ENCODE measurements at regions of chr15 and their contacts with region 1.

Region 1: GRCh38 chr15:68038246-68038645 is 15.9 kb upstream of the PIAS1 start:
- DNase-seq: no peak
- ATAC-seq: no peak
- H3K4me3 ChIP-seq: no peak overlapping the region
- H3K4me3 Mint-ChIP-seq: no peak overlapping the region
- H3K27ac ChIP-seq: no peak overlapping the region
- H3K27ac Mint-ChIP-seq: no peak overlapping the region
- H3K4me1 ChIP-seq: no peaks in the 10 kb centered on the region
- H3K4me1 Mint-ChIP-seq: peaks cover 15 to 16% of the 10 kb centered on the region in 2 donors
- H3K27me3 ChIP-seq: peaks cover 2% of the 10 kb centered on the region
- H3K27me3 Mint-ChIP-seq: peaks cover 35 to 65% of the 10 kb centered on the region in 2 donors
- CTCF ChIP-seq: no peak

Region 2: DNA sequence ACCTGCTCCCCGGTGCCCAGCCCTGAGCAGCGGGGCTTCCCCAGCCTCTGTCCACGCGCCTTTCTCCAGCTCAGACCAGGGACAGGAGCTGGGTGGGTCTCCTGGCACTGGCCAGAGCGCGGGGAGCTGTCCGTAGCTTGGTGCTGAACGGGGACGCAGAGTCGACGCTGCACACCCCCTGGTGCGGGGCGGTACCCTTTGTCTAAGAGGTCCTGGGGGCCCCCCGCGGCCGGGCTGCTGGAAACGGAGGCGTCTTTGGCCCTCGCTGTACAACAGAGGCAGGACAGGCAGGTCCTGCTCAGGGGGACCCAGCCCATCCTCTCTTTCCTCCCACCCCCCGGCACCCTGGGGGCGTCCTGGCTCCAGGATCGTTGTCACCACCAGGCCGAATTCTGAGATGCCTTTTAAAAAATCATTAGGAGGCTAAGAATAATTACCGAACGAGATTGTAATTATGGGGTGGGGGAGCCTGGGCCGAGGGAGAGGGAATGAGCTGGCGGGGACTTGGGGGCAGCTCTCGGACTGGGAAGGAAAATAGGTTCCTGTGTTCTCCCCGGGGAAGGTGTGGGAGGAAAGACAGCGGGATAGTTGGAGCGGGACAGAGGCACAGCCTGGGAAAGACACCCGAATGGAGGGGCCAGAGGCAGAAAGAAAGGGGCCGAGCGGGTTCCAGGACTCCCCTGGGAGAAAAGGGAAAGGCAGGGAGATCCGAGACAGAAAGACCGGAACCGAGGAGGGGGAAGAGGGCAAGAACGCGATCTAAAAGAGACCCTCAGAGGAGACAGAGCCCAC is 217.1 kb before region 1 on chr15:
- intact Hi-C with region 1: no loop called
- DNase-seq: peak in 1 of 2 donors; percentile 59
- ATAC-seq: peak; percentile 27 to 92 (median 64)
- H3K4me3 ChIP-seq: no peak overlapping the region
- H3K4me3 Mint-ChIP-seq: peak overlapping the region; percentile 53
- H3K27ac ChIP-seq: no peak overlapping the region
- H3K27ac Mint-ChIP-seq: no peak overlapping the region
- H3K4me1 ChIP-seq: peaks cover 30% of the 10 kb centered on the region
- H3K4me1 Mint-ChIP-seq: peaks cover 29 to 44% of the 10 kb centered on the region in 2 donors
- H3K27me3 ChIP-seq: peaks cover 58% of the 10 kb centered on the region
- H3K27me3 Mint-ChIP-seq: peaks cover 72 to 79% of the 10 kb centered on the region in 2 donors
- CTCF ChIP-seq: no peak

Region 3: GRCh38 chr15:67839929-67840748 is 198.1 kb before region 1 on chr15 and contains the start of gene RNU6-1:
- intact Hi-C with region 1: no loop called
- DNase-seq: peak; percentile 94 to 98
- ATAC-seq: peak; percentile 85 to 97 (median 92)
- H3K4me3 ChIP-seq: peak within 1 kb of the TSS; percentile 96
- H3K4me3 Mint-ChIP-seq: peak within 1 kb of the TSS; percentile 96
- H3K27ac ChIP-seq: peak within 1 kb of the TSS; percentile 97
- H3K27ac Mint-ChIP-seq: peak within 1 kb of the TSS; percentile 99
- H3K4me1 ChIP-seq: peaks cover 32% of the 10 kb centered on the region
- H3K4me1 Mint-ChIP-seq: peaks cover 35 to 41% of the 10 kb centered on the region in 2 donors
- H3K27me3 ChIP-seq: peaks cover 13% of the 10 kb centered on the region
- H3K27me3 Mint-ChIP-seq: peaks cover 16 to 20% of the 10 kb centered on the region in 2 donors
- CTCF ChIP-seq: no peak
- total RNA-seq, gene RNU6-1: not detected

Region 4: DNA sequence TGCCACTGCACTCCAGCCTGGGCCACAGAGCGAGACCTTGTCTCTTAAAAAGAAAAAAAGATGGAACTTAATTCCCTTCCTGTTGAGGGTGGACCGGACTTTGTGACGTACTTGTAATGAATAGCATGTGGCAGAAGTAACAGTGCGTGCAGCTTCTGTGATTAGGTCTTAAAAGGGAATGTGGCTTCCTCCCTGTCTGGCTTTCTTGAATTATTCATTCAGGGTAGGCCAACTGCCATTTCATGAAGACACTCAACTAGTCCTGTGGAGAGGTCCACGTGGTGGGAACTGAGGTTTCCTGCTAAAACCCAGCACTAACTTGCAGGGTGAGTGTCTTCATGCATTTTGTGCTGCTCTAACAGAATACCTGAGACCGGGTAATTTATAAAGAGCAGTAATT is 83.0 kb before region 1 on chr15:
- intact Hi-C with region 1: no loop called
- DNase-seq: no peak
- ATAC-seq: no peak
- H3K4me3 ChIP-seq: no peak overlapping the region
- H3K4me3 Mint-ChIP-seq: no peak overlapping the region
- H3K27ac ChIP-seq: no peak overlapping the region
- H3K27ac Mint-ChIP-seq: no peak overlapping the region
- H3K4me1 ChIP-seq: no peaks in the 10 kb centered on the region
- H3K4me1 Mint-ChIP-seq: no peaks in the 10 kb centered on the region
- H3K27me3 ChIP-seq: no peaks in the 10 kb centered on the region
- H3K27me3 Mint-ChIP-seq: peaks cover 21 to 30% of the 10 kb centered on the region in 2 donors
- CTCF ChIP-seq: no peak

Region 5: GRCh38 chr15:68014219-68014618 is 24.0 kb before region 1 on chr15:
- intact Hi-C with region 1: loop called (anchors 2 kb)
- DNase-seq: no peak
- ATAC-seq: no peak
- H3K4me3 ChIP-seq: no peak overlapping the region
- H3K4me3 Mint-ChIP-seq: no peak overlapping the region
- H3K27ac ChIP-seq: no peak overlapping the region
- H3K27ac Mint-ChIP-seq: no peak overlapping the region
- H3K4me1 ChIP-seq: no peaks in the 10 kb centered on the region
- H3K4me1 Mint-ChIP-seq: no peaks in the 10 kb centered on the region
- H3K27me3 ChIP-seq: no peaks in the 10 kb centered on the region
- H3K27me3 Mint-ChIP-seq: peaks cover 12 to 22% of the 10 kb centered on the region in 2 donors
- CTCF ChIP-seq: no peak

Region 6: DNA sequence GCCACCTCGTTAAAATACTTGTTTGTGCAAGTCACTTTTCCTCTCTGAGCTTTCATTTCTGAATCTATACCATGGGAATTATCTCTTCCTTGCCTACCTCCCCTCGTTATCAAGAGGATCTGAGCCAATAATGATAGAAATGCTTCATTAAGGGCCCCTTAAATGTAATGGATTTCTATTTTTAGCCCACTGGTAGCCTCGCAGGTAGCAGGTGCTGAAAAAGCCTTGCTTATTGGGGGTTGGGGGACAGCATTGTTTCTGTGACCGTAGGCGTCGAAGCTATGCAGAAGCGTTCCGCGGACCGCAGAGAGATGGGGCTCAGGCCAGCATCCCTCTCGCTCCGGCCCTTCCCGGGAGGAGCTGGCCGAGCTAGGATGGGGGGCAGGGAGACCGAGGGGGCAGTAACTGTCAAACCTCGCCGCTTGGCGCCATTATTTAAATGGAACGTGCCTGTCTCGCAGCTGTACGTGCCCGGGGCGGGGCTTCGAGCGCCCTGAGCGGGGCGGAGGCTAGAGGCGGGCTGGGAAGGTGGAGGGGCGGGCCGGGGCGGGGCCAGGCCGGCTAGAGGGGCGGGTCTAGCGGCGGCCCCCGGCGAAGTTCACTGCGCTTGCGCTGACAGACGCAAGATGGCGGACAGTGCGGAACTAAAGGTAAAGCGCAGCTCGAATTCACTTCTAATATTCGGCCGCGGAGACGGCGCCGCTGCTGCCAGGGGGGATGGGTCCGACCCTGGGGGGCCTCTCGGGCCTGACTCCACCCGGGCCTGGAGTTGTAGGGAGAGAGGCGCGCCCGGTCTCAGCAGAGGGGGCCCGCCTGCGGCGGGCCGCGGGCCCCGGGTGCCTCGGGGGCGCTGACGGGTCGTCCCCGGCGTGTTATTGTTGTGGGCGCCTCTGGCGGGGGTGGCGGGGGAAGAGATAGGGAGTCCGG is 15.7 kb after region 1 on chr15 and contains the start of gene PIAS1:
- intact Hi-C with region 1: no loop called
- DNase-seq: peak; percentile 90 to 97
- ATAC-seq: peak; percentile 88 to 98 (median 93)
- H3K4me3 ChIP-seq: peak within 1 kb of the TSS; percentile 99
- H3K4me3 Mint-ChIP-seq: peak within 1 kb of the TSS; percentile 98
- H3K27ac ChIP-seq: peak within 1 kb of the TSS; percentile 83
- H3K27ac Mint-ChIP-seq: peak within 1 kb of the TSS; percentile 91 to 92
- H3K4me1 ChIP-seq: peaks cover 12% of the 10 kb centered on the region
- H3K4me1 Mint-ChIP-seq: peaks cover 42 to 47% of the 10 kb centered on the region in 2 donors
- H3K27me3 ChIP-seq: no peaks in the 10 kb centered on the region
- H3K27me3 Mint-ChIP-seq: no peaks in the 10 kb centered on the region
- CTCF ChIP-seq: no peak
- total RNA-seq, gene PIAS1: 94.7 to 103 (median 99.2) TPM

Measured in natural killer cell (primary cell).